Mammary epithelial cell (primary cell): ENCODE measurements at regions of chr10 and their contacts with region 1.

Region 1: DNA sequence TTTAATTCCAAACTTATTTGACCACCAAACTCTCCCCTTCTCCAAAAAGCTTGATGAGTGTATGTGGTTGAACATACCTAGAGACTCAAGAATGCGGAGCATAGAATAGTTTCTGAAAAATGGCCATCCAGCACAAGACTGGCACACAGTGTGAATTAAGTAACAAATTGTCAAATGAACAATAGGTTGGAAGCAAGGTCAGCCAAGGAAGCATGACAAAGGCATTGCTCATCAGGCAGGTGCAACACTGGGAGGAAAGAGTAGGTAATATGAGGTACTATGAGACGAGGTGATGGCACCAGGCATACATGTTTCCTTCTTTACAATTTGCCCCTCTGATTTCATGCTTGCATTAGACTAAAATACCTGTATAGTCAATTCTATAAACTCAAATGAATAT is 73.7 kb downstream of the DKK1 start:
- DNase-seq: peak; percentile 85
- H3K4me3 ChIP-seq: no peak overlapping the region
- H3K27ac ChIP-seq: peak overlapping the region; percentile 30
- H3K4me1 ChIP-seq: peaks cover 35% of the 10 kb centered on the region
- H3K27me3 ChIP-seq: no peaks in the 10 kb centered on the region
- CTCF ChIP-seq: no peak

Region 2: DNA sequence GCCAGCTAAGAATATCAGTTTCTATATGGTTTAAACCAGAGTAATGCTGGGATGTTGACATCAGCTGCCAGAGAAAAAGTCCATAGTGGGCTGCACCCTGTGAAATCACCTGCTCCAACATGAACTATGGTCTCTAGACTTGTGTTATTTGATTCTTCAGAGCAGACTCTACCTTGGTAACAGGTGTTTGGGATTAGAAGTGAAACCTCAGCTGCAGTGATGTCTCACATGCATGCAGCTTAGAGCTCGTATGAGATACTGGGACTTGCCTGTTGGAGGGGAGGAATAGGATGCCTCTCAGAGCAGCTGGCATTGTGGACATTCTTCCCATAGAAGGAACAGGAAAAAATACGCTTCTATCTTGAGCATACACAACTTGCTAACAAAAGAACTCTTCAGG is 401.2 kb before region 1 on chr10:
- CTCF ChIA-PET with region 1: no interaction called
- dilution Hi-C with region 1: no loop called
- in situ Hi-C with region 1: no loop called
- intact Hi-C with region 1: no loop called
- DNase-seq: no peak
- H3K4me3 ChIP-seq: no peak overlapping the region
- H3K27ac ChIP-seq: no peak overlapping the region
- H3K4me1 ChIP-seq: no peaks in the 10 kb centered on the region
- H3K27me3 ChIP-seq: no peaks in the 10 kb centered on the region
- CTCF ChIP-seq: no peak

Region 3: DNA sequence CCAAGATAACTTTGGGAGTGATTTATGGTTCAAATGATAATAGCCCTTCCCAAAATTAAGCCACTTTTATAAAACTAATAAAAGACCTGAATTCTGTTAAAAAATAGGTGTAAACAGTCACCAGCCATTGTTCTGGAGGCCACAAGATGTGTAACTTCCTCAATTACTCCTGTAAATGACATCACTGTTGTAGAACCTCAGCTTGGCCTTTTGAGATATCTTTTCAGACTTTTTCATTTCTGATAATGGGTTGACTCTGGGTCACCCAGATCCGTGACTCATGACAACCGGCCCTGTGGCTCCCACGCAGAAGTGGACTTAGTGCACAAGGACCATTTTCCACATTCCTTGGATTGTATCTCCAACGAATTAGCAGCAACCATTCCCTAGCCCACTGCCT is 32.9 kb after region 1 on chr10:
- CTCF ChIA-PET with region 1: no interaction called
- dilution Hi-C with region 1: loop called (anchors 5 kb)
- in situ Hi-C with region 1: no loop called
- intact Hi-C with region 1: no loop called
- DNase-seq: no peak
- H3K4me3 ChIP-seq: no peak overlapping the region
- H3K27ac ChIP-seq: no peak overlapping the region
- H3K4me1 ChIP-seq: no peaks in the 10 kb centered on the region
- H3K27me3 ChIP-seq: no peaks in the 10 kb centered on the region
- CTCF ChIP-seq: no peak

Region 4: DNA sequence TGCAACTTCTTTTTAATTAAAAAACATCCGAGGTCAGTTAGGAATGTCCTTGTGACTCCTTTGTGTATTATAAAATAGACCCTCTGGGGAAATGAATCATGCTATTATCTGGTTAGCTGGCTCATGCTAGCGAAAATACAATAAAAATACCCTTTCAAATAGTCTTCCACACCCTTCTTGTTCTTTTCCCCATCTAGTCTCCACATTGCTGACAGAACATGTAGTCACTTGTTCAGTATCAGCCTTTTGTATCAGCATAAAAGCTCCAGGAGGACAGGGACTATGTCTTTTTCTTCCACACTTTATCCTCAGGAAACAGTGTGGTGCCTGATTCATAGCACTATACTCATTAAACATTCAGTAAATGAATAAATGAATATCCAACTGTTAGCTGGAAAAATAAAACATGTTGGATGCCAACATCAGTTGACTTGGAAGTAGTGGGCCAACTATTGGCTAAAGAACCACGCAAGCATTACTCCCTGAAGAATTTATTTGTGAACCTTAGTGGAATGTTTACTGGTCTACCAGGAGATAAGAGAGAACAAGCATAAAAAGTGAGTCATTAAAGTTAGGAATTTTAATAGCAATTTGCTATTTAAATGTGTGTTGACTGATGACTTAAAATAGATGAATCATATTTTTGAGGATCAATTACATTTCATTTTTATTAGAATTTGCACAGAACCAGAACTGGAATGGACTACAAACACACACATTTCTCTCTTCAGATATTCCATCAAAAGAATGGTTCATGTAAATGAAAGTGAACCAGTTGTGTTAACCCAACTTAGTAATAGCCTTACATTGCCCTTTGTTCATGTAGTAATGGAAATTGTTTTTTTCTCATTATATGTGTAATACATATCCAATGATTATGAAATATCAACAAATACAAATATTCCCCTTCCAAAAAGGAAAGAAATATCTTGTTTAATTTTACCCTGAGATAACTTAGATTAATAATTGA is 56.0 kb after region 1 on chr10:
- CTCF ChIA-PET with region 1: no interaction called
- dilution Hi-C with region 1: no loop called
- in situ Hi-C with region 1: no loop called
- intact Hi-C with region 1: loop called (anchors 5 kb)
- DNase-seq: peak; percentile 98
- H3K4me3 ChIP-seq: peak overlapping the region in 1 of 3 experiments; percentile 25
- H3K27ac ChIP-seq: peak overlapping the region; percentile 96
- H3K4me1 ChIP-seq: peaks cover 39% of the 10 kb centered on the region
- H3K27me3 ChIP-seq: no peaks in the 10 kb centered on the region
- CTCF ChIP-seq: no peak